ENCODE measurements at regions of chr10 and their contacts with region 1.

Region 1: DNA sequence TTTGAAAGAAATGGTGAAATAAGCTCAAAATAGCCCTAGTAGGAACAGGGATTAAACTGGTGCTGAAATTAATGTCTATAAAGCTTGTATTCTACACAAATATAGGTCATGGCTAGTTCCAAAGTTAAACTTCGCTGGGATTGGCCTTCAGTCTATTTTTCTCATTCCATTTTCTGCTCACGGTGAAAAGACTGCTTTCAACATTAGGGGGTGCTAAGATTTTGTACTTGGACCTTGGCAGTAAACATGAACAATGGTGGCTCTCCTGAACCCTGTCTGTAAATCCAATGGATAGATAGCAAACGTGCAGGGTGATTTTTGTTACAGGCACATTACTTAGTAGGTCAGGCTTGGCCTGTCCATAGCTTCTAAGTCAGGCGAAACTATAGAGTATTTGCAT is 36.0 kb upstream of the RSU1 start:
- DNase-seq: peak; percentile 78
- H3K4me3 ChIP-seq: no peak overlapping the region
- CTCF ChIP-seq: peak; percentile 63

Region 2: DNA sequence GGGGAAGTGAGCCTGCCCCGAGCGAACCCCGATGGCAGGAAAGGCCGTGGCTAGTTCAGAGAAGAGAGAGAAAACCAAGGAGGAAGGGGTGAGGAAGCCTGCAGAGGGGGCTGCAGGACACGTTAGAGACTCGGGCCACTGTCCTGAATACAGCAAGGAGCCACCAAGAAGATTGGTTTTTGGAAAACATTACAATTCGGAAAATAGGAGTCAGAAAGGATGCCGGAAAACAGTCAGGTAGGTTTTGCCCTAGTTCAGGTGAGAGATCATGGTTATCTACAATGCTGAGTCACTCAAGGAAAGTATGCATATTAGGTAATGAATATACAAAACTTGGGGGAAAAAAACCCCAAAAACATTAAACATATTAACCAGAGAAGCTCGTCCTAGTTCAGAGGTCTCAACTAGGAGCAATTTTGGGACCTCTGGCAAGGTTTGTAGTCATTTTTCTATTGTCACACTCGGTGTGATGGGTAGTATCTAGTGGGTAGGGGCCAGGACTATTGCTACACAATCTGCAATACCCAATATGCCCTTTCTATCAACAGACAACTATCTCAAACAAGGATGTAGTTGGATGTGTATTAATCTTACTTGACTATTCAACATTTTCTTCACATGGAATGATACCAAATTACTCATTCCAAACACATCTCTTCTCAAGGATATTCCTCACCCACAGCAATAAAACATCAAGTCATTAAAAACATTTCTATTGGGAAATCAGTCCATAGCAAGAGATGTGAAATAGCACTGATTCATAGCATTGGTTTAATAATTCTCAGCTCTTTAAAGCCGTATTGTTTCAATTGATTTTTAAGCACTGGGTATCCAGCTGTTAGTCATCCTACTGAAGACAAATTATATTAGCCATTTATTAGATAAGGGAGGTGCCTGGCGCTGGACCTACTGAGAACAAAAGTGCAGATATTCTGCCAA is 38.4 kb after region 1 on chr10:
- in situ Hi-C with region 1: no loop called
- DNase-seq: peak; percentile 74
- H3K4me3 ChIP-seq: no peak overlapping the region
- CTCF ChIP-seq: peak; percentile 30

Region 3: GRCh38 chr10:17228091-17228940 is 375.1 kb after region 1 on chr10 and contains the start of gene VIM:
- in situ Hi-C with region 1: loop called (anchors 25 kb)
- DNase-seq: peak; percentile 99
- H3K4me3 ChIP-seq: peak within 1 kb of the TSS; percentile 98
- CTCF ChIP-seq: no peak